ENCODE measurements at regions of chr5 and their contacts with region 1.

Region 1: GRCh38 chr5:52799983-52800393 is 12.3 kb downstream of the ITGA1 start:
- DNase-seq: peak; percentile 94
- CTCF ChIP-seq: no peak

Region 2: GRCh38 chr5:52787600-52788504 is 12.1 kb before region 1 on chr5 and contains the starts of genes ITGA1 and PELO:
- CTCF ChIA-PET with region 1: interaction called, 13 read pairs
- POLR2A ChIA-PET with region 1: no interaction called
- DNase-seq: peak; percentile 71
- CTCF ChIP-seq: peak; percentile 45